Activated CD4-positive, alpha-beta T cell treated with anti-CD3 and anti-CD28 coated beads, Interleukin-2, amount 10 ng/mL, durations not matched to agents 24 days and 14 days (primary cell): ENCODE measurements at regions of chr6 and their contacts with region 1.

Region 1: DNA sequence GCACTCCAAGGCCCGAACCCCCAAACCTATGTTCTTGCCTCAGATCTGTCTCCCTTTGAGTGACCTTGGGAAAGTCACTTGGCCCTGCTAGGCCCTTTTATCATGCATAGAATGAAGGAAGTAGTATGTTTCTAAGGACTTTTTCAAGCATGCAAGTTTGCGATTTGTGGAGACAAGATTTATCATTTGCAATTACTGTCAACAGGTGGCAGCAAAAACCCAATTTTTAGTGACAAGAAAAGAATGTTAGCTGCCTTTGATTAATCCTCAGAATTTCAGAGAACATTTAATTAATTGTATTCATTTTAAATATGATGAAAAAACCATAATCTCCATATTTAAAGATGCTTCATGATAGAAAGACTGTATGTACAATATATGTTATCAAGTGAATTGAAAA is 28.3 kb upstream of the PREP start:
- DNase-seq: peak; percentile 80
- H3K4me3 Mint-ChIP-seq: no peak overlapping the region
- H3K27ac Mint-ChIP-seq: no peak overlapping the region
- H3K4me1 Mint-ChIP-seq: peaks cover 2% of the 10 kb centered on the region
- H3K27me3 Mint-ChIP-seq: peaks cover 31% of the 10 kb centered on the region

Region 2: GRCh38 chr6:105209950-105210706 is 221.1 kb before region 1 on chr6:
- intact Hi-C with region 1: no loop called
- DNase-seq: no peak
- H3K4me3 Mint-ChIP-seq: no peak overlapping the region
- H3K27ac Mint-ChIP-seq: no peak overlapping the region
- H3K4me1 Mint-ChIP-seq: peaks cover 9% of the 10 kb centered on the region
- H3K27me3 Mint-ChIP-seq: peaks cover 11% of the 10 kb centered on the region

Region 3: DNA sequence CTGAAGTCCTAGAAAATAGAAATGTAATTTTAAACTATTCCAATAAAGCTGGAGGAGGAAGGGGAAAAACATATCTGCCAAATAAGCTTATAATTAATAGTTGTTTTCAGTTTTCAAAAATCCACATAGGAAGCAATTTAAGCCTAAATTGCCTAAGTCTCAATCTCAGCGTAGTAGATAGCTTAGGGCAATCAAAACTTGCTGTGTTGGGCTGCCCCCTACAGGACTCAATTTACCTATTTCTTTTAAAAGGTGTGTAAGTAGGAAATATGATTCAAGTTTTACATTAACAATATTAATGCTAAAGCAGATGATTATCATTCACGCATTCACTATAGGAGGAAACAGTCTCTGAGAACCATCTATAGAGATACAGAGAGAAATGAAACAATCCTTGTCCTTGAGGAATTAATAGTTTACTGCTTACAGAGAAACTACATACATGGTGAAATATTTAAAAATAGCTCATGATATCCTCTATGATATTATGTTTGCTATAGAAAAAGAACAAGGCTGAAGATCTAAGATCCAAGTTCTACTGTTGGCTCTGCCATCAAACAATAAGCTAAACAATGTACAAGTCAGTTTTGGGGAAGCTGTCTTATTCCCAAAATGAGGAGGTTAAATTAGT is 792.2 kb after region 1 on chr6:
- intact Hi-C with region 1: loop called (anchors 1 kb)
- DNase-seq: peak; percentile 91
- H3K4me3 Mint-ChIP-seq: no peak overlapping the region
- H3K27ac Mint-ChIP-seq: no peak overlapping the region
- H3K4me1 Mint-ChIP-seq: peaks cover 32% of the 10 kb centered on the region
- H3K27me3 Mint-ChIP-seq: no peaks in the 10 kb centered on the region

Region 4: GRCh38 chr6:106300944-106301343 is 869.7 kb after region 1 on chr6:
- intact Hi-C with region 1: loop called (anchors 2 kb)
- DNase-seq: no peak
- H3K4me3 Mint-ChIP-seq: no peak overlapping the region
- H3K27ac Mint-ChIP-seq: no peak overlapping the region
- H3K4me1 Mint-ChIP-seq: peaks cover 10% of the 10 kb centered on the region
- H3K27me3 Mint-ChIP-seq: no peaks in the 10 kb centered on the region